ENCODE measurements at regions of chr2 and their contacts with region 1.

Region 1: GRCh38 chr2:119476301-119477021 is 44.8 kb downstream of the TMEM37 start:
- DNase-seq: peak; percentile 47
- H3K4me3 ChIP-seq: no peak overlapping the region
- CTCF ChIP-seq: peak; percentile 97

Region 2: DNA sequence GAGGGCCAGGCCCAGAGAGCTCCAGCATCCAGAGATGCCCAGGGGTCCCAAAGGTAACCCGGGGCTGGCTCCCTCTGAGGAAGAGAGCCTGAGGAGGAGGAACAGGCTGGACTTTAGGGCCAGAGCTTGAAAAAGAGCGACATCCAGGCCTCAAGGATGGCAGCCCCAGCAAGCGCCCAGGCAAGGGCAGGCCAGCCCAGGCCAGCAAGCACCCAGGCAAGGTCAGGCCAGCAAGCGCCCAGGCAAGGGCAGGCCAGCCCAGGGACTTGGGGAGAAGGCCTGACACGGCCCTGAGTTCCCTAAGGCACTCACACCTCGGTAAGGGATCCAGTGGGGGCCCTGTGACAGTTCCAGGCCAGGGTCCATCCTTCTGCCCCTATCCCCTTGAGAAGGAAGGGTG is 79.3 kb before region 1 on chr2:
- in situ Hi-C with region 1: loop called (anchors 5 kb)
- DNase-seq: no peak
- H3K4me3 ChIP-seq: no peak overlapping the region
- CTCF ChIP-seq: no peak

Region 3: GRCh38 chr2:119508756-119509155 is 32.3 kb after region 1 on chr2:
- in situ Hi-C with region 1: no loop called
- DNase-seq: no peak
- H3K4me3 ChIP-seq: no peak overlapping the region
- CTCF ChIP-seq: no peak

Measured in astrocyte of the cerebellum (primary cell).